Activated CD4-positive, alpha-beta T cell treated with anti-CD3 and anti-CD28 coated beads, Interleukin-2, amount 10 ng/mL, durations not matched to agents 24 days and 14 days (primary cell): ENCODE measurements at regions of chr6 and their contacts with region 1.

Region 1: DNA sequence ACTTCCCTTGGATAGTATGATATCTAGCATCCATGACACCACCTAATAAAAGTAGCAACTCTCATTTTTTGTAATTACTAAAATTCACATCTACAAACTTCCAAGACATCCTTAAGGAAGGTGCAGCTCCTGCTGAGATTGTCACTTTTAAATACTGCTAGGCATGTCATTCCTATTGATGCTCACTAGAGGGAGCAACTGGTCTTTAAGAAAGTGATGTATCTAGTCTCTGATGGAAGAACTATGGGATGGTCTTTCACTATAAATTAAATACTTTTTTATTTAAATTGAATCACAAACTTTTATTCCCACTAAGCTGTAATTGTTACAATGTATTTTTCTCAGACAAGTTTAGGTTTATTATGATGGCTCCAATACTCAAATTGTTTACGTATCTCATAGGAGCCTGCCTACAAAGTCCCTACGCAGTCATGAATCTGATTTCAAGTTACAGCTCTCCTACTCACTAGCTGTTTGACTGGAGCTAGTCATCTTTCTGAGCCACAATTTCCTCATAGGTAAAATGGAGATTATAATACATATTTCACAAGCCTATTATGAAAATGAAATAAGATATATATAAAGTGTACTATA is 8.1 kb upstream of the TSPYL1 start:
- DNase-seq: peak; percentile 63
- H3K4me3 Mint-ChIP-seq: no peak overlapping the region
- H3K27ac Mint-ChIP-seq: no peak overlapping the region
- H3K4me1 Mint-ChIP-seq: no peaks in the 10 kb centered on the region
- H3K27me3 Mint-ChIP-seq: peaks cover 9% of the 10 kb centered on the region

Region 2: GRCh38 chr6:116561377-116562018 is 273.7 kb after region 1 on chr6:
- intact Hi-C with region 1: loop called (anchors 1 kb)
- DNase-seq: peak; percentile 90
- H3K4me3 Mint-ChIP-seq: no peak overlapping the region
- H3K27ac Mint-ChIP-seq: no peak overlapping the region
- H3K4me1 Mint-ChIP-seq: peaks cover 1% of the 10 kb centered on the region
- H3K27me3 Mint-ChIP-seq: peaks cover 18% of the 10 kb centered on the region

Region 3: DNA sequence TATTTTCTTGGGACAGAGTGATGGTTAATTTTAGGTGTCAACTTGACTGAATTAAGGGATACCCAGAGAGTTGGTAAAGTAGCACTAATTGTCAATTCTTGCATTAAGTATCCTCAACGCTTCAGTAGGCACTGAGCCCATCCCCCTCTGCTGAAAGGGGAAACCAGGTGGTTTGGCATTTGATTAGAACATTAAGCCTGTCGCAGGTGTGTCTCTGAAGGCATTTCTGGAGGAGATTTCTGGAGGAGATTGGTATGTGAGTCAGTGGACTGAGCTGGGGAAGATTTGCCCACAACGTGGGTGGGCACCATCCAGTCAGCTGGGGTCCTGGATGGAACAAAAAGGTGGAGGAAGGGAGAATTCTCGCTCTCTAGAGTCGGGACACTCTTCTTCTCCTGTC is 709.1 kb after region 1 on chr6:
- intact Hi-C with region 1: no loop called
- DNase-seq: no peak
- H3K4me3 Mint-ChIP-seq: no peak overlapping the region
- H3K27ac Mint-ChIP-seq: no peak overlapping the region
- H3K4me1 Mint-ChIP-seq: no peaks in the 10 kb centered on the region
- H3K27me3 Mint-ChIP-seq: no peaks in the 10 kb centered on the region